ENCODE measurements at regions of chr10 and their contacts with region 1.

Region 1: GRCh38 chr10:132654702-132655661 is 117.4 kb downstream of the INPP5A start:
- DNase-seq: no peak
- ATAC-seq: peak; percentile 32 to 68
- H3K4me3 ChIP-seq: no peak overlapping the region
- H3K27ac ChIP-seq: no peak overlapping the region
- H3K4me1 ChIP-seq: no peaks in the 10 kb centered on the region
- H3K27me3 ChIP-seq: no peaks in the 10 kb centered on the region
- CTCF ChIP-seq: peak; percentile 70 to 90 (median 87)
- POLR2A ChIP-seq: no peak

Region 2: GRCh38 chr10:132571650-132572535 is 83.1 kb before region 1 on chr10:
- in situ Hi-C with region 1: no loop called
- intact Hi-C with region 1: no loop called
- DNase-seq: peak; percentile 73 to 87
- ATAC-seq: peak; percentile 100
- H3K4me3 ChIP-seq: no peak overlapping the region
- H3K27ac ChIP-seq: peak overlapping the region; percentile 41 to 78 (median 54)
- H3K4me1 ChIP-seq: peaks cover 34 to 46% of the 10 kb centered on the region in 2 donors
- H3K27me3 ChIP-seq: no peaks in the 10 kb centered on the region
- CTCF ChIP-seq: no peak
- POLR2A ChIP-seq: no peak

Region 3: GRCh38 chr10:132722394-132723329 is 67.7 kb after region 1 on chr10:
- in situ Hi-C with region 1: no loop called
- intact Hi-C with region 1: loop called (anchors 10 kb)
- DNase-seq: peak; percentile 77 to 82
- ATAC-seq: peak; percentile 95 to 96
- H3K4me3 ChIP-seq: peak overlapping the region; percentile 25 to 35 (median 31)
- H3K27ac ChIP-seq: peak overlapping the region; percentile 67 to 86 (median 78)
- H3K4me1 ChIP-seq: peaks cover 10 to 14% of the 10 kb centered on the region in 2 donors
- H3K27me3 ChIP-seq: no peaks in the 10 kb centered on the region
- CTCF ChIP-seq: peak in 2 of 5 experiments; percentile 14 to 32
- POLR2A ChIP-seq: peak in 1 of 2 donors; percentile 25

Region 4: GRCh38 chr10:132788180-132788830 is 133.3 kb after region 1 on chr10:
- in situ Hi-C with region 1: no loop called
- intact Hi-C with region 1: loop called (anchors 5 kb)
- DNase-seq: no peak
- ATAC-seq: no peak
- H3K4me3 ChIP-seq: no peak overlapping the region
- H3K27ac ChIP-seq: no peak overlapping the region
- H3K4me1 ChIP-seq: peaks cover 0 to 5% of the 10 kb centered on the region in 2 donors
- H3K27me3 ChIP-seq: peaks cover 46 to 70% (median 51%) of the 10 kb centered on the region in 3 donors
- CTCF ChIP-seq: peak in 1 of 5 experiments; percentile 12
- POLR2A ChIP-seq: no peak

Region 5: GRCh38 chr10:133241501-133242205 is 586.7 kb after region 1 on chr10:
- in situ Hi-C with region 1: no loop called
- intact Hi-C with region 1: no loop called
- DNase-seq: no peak
- ATAC-seq: no peak
- H3K4me3 ChIP-seq: no peak overlapping the region
- H3K27ac ChIP-seq: no peak overlapping the region
- H3K4me1 ChIP-seq: no peaks in the 10 kb centered on the region
- H3K27me3 ChIP-seq: peaks cover 43 to 75% (median 56%) of the 10 kb centered on the region in 3 donors
- CTCF ChIP-seq: no peak
- POLR2A ChIP-seq: no peak